Activated CD8-positive, alpha-beta T cell treated with anti-CD3 and anti-CD28 coated beads, Interleukin-2, amount 10 ng/mL, durations not matched to agents 7 days and 5 days (primary cell): ENCODE measurements at regions of chr6 and their contacts with region 1.

Region 1: GRCh38 chr6:70667711-70668498 is at the start of gene SMAP1:
- DNase-seq: peak; percentile 94
- ATAC-seq: peak; percentile 94
- H3K4me3 Mint-ChIP-seq: peak within 1 kb of the TSS; percentile 86
- H3K27ac Mint-ChIP-seq: peak within 1 kb of the TSS; percentile 75
- H3K4me1 Mint-ChIP-seq: peaks cover 46% of the 10 kb centered on the region
- H3K27me3 Mint-ChIP-seq: no peaks in the 10 kb centered on the region
- total RNA-seq, gene SMAP1: 36.3 to 38.7 TPM

Region 2: DNA sequence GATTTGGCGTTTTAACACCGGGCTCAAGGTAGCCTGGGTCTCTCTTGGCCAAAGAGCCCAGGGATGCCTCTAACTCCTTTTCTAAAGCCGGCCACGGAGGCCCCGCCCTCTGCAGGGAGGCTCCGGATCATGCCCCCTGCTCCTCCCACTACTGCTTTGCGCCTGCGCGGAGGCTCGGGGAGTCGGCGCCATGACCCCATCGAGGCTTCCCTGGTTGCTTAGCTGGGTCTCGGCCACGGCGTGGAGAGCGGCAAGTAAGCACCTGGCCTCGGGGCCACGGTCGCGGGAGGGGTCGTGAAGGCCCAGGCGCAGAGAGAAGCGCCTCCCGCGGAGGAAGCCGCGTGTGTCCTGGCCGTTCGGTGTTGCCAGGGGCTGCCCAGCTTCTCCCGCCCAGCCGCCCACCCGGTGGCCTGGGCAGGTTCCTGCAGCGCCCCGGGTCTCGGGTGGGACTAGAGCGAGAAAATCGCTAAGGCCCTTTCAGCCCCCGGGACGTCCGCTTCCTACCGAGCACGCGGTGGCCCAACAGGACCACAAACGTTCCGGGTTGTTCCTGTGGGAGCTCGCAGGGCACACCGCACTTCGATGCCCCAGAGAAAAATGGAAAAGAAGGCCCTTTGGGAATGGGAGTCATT is 101.0 kb before region 1 on chr6 and contains the start of gene SDHAF4:
- CTCF ChIA-PET with region 1: interaction called, 8 read pairs
- POLR2A ChIA-PET with region 1: interaction called, 11 read pairs
- DNase-seq: peak; percentile 95
- ATAC-seq: peak; percentile 100
- H3K4me3 Mint-ChIP-seq: peak within 1 kb of the TSS; percentile 87
- H3K27ac Mint-ChIP-seq: peak within 1 kb of the TSS; percentile 82
- H3K4me1 Mint-ChIP-seq: peaks cover 15% of the 10 kb centered on the region
- H3K27me3 Mint-ChIP-seq: peaks cover 9% of the 10 kb centered on the region
- total RNA-seq, gene SDHAF4: 7.7 to 9.5 TPM

Region 3: GRCh38 chr6:70651326-70651905 is 16.5 kb before region 1 on chr6:
- CTCF ChIA-PET with region 1: interaction called, 8 read pairs
- POLR2A ChIA-PET with region 1: interaction called, 40 read pairs
- DNase-seq: peak; percentile 91
- ATAC-seq: peak; percentile 93
- H3K4me3 Mint-ChIP-seq: peak overlapping the region; percentile 56
- H3K27ac Mint-ChIP-seq: peak overlapping the region; percentile 77
- H3K4me1 Mint-ChIP-seq: peaks cover 44% of the 10 kb centered on the region
- H3K27me3 Mint-ChIP-seq: peaks cover 6% of the 10 kb centered on the region

Region 4: GRCh38 chr6:70894001-70894400 is 226.1 kb after region 1 on chr6:
- CTCF ChIA-PET with region 1: no interaction called
- POLR2A ChIA-PET with region 1: no interaction called
- DNase-seq: no peak
- ATAC-seq: no peak
- H3K4me3 Mint-ChIP-seq: no peak overlapping the region
- H3K27ac Mint-ChIP-seq: no peak overlapping the region
- H3K4me1 Mint-ChIP-seq: no peaks in the 10 kb centered on the region
- H3K27me3 Mint-ChIP-seq: peaks cover 3% of the 10 kb centered on the region

Region 5: DNA sequence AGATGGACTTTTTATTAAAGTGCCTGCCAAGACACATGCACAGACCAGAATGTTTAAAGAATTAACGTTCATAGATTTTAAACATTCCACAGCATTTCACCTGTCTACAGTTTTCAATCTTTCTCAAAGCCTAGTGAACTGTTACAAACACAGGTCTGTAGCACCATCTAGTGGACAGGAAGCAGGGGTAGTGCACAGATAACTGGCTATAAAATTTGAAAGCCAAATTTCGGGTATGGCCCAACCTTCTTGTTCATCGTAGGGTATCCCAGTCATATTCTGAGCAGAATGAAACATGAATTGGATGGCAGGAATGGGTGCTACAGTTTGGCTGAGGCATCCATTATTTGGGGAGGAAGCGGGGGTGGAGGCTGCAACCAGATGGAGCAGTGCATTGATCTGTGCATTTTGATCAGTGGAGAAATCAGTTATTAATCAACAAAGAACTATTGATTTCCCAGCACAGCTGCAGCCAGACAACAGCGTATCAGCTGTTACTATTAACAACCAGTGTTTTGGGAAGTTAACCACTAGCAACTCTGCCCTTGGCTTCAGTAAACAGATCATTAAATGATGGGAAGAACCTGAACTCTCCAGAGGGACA is 345.1 kb after region 1 on chr6:
- CTCF ChIA-PET with region 1: no interaction called
- POLR2A ChIA-PET with region 1: no interaction called
- DNase-seq: peak; percentile 42
- ATAC-seq: peak; percentile 87
- H3K4me3 Mint-ChIP-seq: no peak overlapping the region
- H3K27ac Mint-ChIP-seq: no peak overlapping the region
- H3K4me1 Mint-ChIP-seq: no peaks in the 10 kb centered on the region
- H3K27me3 Mint-ChIP-seq: peaks cover 6% of the 10 kb centered on the region